ENCODE measurements at regions of chr15 and their contacts with region 1.

Region 1: DNA sequence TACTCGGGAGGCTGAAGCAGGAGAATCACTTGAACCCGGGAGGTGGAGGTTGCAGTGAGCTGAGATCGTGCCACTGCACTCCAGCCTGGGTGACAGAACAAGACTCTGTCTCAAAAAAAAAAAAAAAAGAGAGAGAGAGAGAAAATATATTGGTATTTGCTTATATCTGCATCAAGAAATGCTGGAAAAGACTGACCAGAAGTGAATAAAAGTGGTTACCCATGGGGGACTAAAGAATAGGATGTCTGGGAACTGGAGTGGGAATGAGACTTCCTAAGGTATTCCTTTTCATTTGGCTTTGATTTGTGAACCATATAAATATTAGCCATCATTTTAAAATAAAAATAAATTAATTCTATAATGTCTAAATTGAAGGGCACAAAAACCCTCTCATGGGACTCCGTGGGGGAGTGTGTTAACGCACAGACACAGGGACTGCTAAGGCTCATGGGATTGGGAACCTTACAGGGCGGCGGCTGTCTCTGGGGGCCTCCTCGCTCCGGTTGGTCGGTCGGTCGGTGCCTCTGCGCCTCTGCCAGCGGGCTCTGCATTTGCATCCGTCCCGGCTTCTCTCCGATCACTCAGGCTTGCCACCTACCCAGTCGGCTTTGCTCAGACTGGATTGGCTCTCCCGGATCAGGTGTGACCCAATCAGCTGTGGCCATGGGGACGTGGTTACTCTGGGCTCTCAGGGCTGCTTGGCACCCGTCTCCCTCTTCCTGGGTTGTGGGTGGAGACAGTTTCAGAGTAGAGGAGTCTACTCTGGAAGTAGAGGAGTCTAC is 12.7 kb upstream of the TSPAN3 start:
- DNase-seq: peak; percentile 74
- ATAC-seq: peak; percentile 97
- H3K4me3 Mint-ChIP-seq: peak overlapping the region; percentile 63
- H3K27ac Mint-ChIP-seq: peak overlapping the region; percentile 89
- H3K4me1 Mint-ChIP-seq: peaks cover 57% of the 10 kb centered on the region
- H3K27me3 Mint-ChIP-seq: no peaks in the 10 kb centered on the region
- CTCF ChIP-seq: no peak

Region 2: GRCh38 chr15:75090388-75090734 is 1993.2 kb before region 1 on chr15:
- CTCF ChIA-PET with region 1: no interaction called
- POLR2A ChIA-PET with region 1: interaction called, 10 read pairs
- intact Hi-C with region 1: no loop called
- DNase-seq: no peak
- ATAC-seq: no peak
- H3K4me3 Mint-ChIP-seq: no peak overlapping the region
- H3K27ac Mint-ChIP-seq: no peak overlapping the region
- H3K4me1 Mint-ChIP-seq: peaks cover 26% of the 10 kb centered on the region
- H3K27me3 Mint-ChIP-seq: peaks cover 13% of the 10 kb centered on the region
- CTCF ChIP-seq: no peak

Region 3: GRCh38 chr15:76871930-76872329 is 211.6 kb before region 1 on chr15:
- CTCF ChIA-PET with region 1: no interaction called
- POLR2A ChIA-PET with region 1: no interaction called
- intact Hi-C with region 1: no loop called
- DNase-seq: no peak
- ATAC-seq: peak; percentile 21
- H3K4me3 Mint-ChIP-seq: no peak overlapping the region
- H3K27ac Mint-ChIP-seq: peak overlapping the region; percentile 16
- H3K4me1 Mint-ChIP-seq: peaks cover 12% of the 10 kb centered on the region
- H3K27me3 Mint-ChIP-seq: no peaks in the 10 kb centered on the region
- CTCF ChIP-seq: no peak

Region 4: GRCh38 chr15:76931397-76932007 is 152.1 kb before region 1 on chr15 and contains the start of gene RCN2:
- CTCF ChIA-PET with region 1: no interaction called
- POLR2A ChIA-PET with region 1: no interaction called
- intact Hi-C with region 1: no loop called
- DNase-seq: peak; percentile 91
- ATAC-seq: peak; percentile 97
- H3K4me3 Mint-ChIP-seq: peak within 1 kb of the TSS; percentile 90
- H3K27ac Mint-ChIP-seq: peak within 1 kb of the TSS; percentile 93
- H3K4me1 Mint-ChIP-seq: peaks cover 40% of the 10 kb centered on the region
- H3K27me3 Mint-ChIP-seq: no peaks in the 10 kb centered on the region
- CTCF ChIP-seq: no peak
- total RNA-seq, gene RCN2: 23.8 and 25.0 TPM in 2 replicates

Region 5: DNA sequence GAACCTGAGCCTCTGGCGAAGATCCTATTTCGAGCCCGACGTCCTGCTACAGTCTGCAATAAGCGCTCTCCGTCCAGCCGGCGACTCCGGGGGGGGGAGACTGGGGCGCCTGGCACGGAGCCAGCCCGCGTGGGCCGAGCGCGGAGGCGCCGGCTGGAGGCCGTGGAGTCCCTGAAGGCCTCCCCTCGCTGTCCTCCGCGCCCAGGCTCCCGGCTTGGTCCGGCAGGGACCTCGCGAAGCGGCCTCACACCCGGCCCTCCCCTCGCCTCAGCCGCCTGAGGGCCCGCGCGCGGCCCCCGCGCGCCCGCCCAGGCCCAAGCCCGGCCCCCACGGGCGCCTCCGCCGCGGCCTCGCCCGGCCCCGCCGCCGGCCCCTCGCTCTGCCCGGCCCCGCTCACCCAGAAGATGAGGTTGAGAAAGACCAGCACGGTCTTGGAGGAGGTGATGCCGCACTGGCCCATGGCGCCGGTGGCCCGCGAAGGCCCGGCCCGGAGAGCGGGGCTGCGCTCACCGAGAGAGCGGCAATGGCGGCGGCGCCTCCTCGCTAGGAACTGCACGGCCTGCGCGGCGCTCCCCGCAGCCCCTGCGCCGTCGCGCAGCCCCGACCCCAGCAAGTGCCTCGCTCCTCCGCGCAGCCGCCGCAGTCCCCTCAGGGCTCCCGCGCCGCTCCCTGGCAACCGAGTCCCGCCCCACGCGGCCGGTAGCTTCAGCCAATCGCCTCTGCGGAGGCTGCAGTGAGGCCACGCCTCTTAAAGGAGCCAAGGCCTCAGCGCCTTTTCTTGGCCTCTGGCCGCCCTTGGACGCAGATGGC is 12.9 kb before region 1 on chr15 and contains the start of gene TSPAN3:
- CTCF ChIA-PET with region 1: interaction called, 3 read pairs
- POLR2A ChIA-PET with region 1: interaction called, 14 read pairs
- intact Hi-C with region 1: loop called (anchors 1 kb)
- DNase-seq: peak; percentile 95
- ATAC-seq: peak; percentile 95
- H3K4me3 Mint-ChIP-seq: peak within 1 kb of the TSS; percentile 89
- H3K27ac Mint-ChIP-seq: peak within 1 kb of the TSS; percentile 81
- H3K4me1 Mint-ChIP-seq: peaks cover 50% of the 10 kb centered on the region
- H3K27me3 Mint-ChIP-seq: no peaks in the 10 kb centered on the region
- CTCF ChIP-seq: no peak
- total RNA-seq, gene TSPAN3: 104 and 113 TPM in 2 replicates

Region 6: DNA sequence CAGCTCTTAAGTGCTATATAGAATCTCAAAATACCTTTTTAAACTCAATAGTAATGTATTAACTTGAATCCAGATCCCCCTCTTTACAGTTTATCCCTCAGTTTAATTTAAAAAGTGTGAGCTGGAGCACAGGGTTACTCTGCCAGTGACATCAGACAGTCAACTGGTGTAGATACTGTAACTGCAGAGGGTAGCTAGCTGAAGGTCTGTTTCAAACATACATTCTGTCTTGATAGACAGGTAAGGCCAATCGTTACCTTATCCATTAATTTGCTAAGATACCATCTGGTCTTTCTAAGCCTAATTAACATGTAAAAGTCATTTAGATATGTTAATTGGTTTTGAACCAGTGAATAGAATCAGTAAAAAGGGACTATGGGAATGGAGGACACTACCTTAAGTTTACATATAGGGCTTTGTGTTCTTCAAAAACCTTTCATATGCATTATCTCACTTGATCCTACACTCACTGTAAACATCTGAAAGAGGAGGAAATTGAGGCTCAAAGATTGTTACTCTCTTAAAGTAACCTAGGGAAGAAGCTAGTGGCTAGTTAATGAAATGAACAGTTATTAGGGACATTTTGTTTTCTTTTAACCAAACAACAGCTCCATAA is 46.9 kb after region 1 on chr15:
- CTCF ChIA-PET with region 1: no interaction called
- POLR2A ChIA-PET with region 1: no interaction called
- intact Hi-C with region 1: no loop called
- DNase-seq: no peak
- ATAC-seq: no peak
- H3K4me3 Mint-ChIP-seq: no peak overlapping the region
- H3K27ac Mint-ChIP-seq: no peak overlapping the region
- H3K4me1 Mint-ChIP-seq: no peaks in the 10 kb centered on the region
- H3K27me3 Mint-ChIP-seq: no peaks in the 10 kb centered on the region
- CTCF ChIP-seq: no peak

Measured in activated B cell treated with CpG ODN at 0.5 μM for 24 hours (primary cell).